Activated naive CD4-positive, alpha-beta T cell treated with anti-CD3 and anti-CD28 coated beads for 36 hours (primary cell): ENCODE measurements at regions of chr3 and their contacts with region 1.

Region 1: GRCh38 chr3:71006810-71007785 is 576.4 kb downstream of the FOXP1 start:
- DNase-seq: no peak
- H3K4me3 Mint-ChIP-seq: no peak overlapping the region
- H3K27ac Mint-ChIP-seq: peak overlapping the region; percentile 71
- H3K4me1 Mint-ChIP-seq: peaks cover 77% of the 10 kb centered on the region
- H3K27me3 Mint-ChIP-seq: no peaks in the 10 kb centered on the region

Region 2: DNA sequence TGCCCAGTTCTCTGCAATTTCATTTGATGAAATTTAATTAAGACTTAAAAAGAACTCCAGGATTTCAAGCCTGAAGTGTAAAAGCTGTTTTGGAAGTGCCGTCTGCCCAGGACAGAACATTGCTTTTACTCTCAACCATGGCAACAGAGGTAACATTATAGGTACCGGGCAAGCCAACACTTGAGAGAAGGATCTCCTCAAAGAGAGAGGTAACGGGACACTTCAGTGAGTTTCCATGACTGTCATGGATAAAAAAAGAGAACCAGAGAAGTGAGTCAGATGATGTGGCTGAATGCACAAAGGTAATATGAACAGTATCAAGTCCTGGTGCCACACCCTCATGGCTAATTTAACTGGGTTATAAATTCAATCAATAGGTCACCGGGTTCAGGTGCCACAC is 1754.5 kb before region 1 on chr3:
- CTCF ChIA-PET with region 1: no interaction called
- intact Hi-C with region 1: no loop called
- DNase-seq: no peak
- H3K4me3 Mint-ChIP-seq: no peak overlapping the region
- H3K27ac Mint-ChIP-seq: no peak overlapping the region
- H3K4me1 Mint-ChIP-seq: peaks cover 13% of the 10 kb centered on the region
- H3K27me3 Mint-ChIP-seq: no peaks in the 10 kb centered on the region

Region 3: GRCh38 chr3:70550723-70551319 is 456.3 kb before region 1 on chr3:
- CTCF ChIA-PET with region 1: interaction called, 5 read pairs
- intact Hi-C with region 1: loop called (anchors 5 kb)
- DNase-seq: peak; percentile 88
- H3K4me3 Mint-ChIP-seq: no peak overlapping the region
- H3K27ac Mint-ChIP-seq: no peak overlapping the region
- H3K4me1 Mint-ChIP-seq: no peaks in the 10 kb centered on the region
- H3K27me3 Mint-ChIP-seq: no peaks in the 10 kb centered on the region

Region 4: DNA sequence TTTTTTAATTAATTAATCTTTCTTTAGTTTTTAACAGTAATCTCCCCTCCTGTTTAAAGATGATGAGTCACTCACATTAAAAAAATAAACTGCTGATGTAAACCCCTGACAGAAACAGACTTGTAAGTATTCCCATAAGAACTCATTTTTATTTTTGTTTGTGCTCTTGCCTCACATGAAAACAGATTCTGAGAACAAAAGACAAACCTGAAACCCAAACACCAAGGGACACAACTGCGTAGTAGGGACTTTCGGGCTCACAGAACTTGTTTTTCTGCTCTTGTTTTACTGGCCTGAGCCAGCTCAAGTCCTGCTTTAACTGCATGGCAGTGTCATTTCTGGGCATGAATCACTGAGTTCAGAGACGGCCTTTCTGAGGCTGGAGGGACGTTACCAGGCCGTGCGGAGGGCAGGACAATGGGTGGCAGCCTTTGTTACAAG is 24.4 kb before region 1 on chr3:
- CTCF ChIA-PET with region 1: interaction called, 8 read pairs
- intact Hi-C with region 1: loop called (anchors 2 kb)
- DNase-seq: peak; percentile 66
- H3K4me3 Mint-ChIP-seq: no peak overlapping the region
- H3K27ac Mint-ChIP-seq: peak overlapping the region; percentile 96
- H3K4me1 Mint-ChIP-seq: peaks cover 74% of the 10 kb centered on the region
- H3K27me3 Mint-ChIP-seq: no peaks in the 10 kb centered on the region

Region 5: GRCh38 chr3:71050538-71051258 is 43.6 kb after region 1 on chr3:
- CTCF ChIA-PET with region 1: interaction called, 5 read pairs
- intact Hi-C with region 1: loop called (anchors 1 kb)
- DNase-seq: peak; percentile 77
- H3K4me3 Mint-ChIP-seq: peak overlapping the region; percentile 6
- H3K27ac Mint-ChIP-seq: peak overlapping the region; percentile 92
- H3K4me1 Mint-ChIP-seq: peaks cover 100% of the 10 kb centered on the region
- H3K27me3 Mint-ChIP-seq: no peaks in the 10 kb centered on the region

Region 6: DNA sequence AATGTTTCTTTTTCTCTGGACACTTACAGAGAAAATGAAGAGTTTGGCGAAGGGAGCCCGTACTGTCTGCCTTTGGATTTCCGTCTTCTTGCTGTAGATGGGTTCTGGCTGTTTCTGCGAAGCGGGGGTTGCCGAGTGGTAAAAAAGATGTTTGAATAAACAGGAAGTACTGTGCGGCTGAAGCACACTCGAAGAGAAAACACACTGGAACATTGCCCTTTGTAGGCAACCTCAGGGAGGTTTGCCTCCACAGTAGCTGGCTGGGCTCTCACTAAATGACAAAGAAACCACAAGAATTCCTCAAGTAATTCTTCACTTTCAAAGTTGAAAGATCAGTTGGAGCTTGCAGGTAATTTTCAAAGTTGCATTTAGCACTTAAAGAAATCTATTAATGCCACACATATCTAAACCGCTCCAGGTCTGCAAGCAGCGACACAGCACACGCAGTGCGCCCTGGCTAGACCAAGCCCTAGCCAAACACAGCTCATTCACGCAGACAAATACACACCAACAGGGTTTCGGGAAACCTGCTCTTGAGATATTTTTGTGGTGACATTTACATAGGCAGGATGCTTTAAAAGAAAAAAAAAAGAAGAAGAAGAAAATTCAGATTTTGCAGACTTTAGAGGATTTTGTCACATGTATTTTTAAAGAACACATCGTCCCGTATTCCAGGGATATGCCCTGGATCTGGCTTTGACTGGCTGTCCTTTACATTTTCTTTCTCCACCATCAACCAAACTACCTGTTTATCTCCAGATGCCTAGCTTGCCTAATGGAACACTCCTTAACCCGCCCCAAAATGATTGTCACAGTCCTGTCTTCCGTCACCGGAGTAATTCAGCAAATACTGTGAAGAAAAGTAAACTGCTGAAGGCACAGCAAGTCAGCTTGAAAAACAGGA is 123.6 kb after region 1 on chr3:
- CTCF ChIA-PET with region 1: no interaction called
- intact Hi-C with region 1: loop called (anchors 2 kb)
- DNase-seq: peak; percentile 82
- H3K4me3 Mint-ChIP-seq: peak overlapping the region; percentile 88
- H3K27ac Mint-ChIP-seq: peak overlapping the region; percentile 96
- H3K4me1 Mint-ChIP-seq: peaks cover 66% of the 10 kb centered on the region
- H3K27me3 Mint-ChIP-seq: no peaks in the 10 kb centered on the region

Region 7: DNA sequence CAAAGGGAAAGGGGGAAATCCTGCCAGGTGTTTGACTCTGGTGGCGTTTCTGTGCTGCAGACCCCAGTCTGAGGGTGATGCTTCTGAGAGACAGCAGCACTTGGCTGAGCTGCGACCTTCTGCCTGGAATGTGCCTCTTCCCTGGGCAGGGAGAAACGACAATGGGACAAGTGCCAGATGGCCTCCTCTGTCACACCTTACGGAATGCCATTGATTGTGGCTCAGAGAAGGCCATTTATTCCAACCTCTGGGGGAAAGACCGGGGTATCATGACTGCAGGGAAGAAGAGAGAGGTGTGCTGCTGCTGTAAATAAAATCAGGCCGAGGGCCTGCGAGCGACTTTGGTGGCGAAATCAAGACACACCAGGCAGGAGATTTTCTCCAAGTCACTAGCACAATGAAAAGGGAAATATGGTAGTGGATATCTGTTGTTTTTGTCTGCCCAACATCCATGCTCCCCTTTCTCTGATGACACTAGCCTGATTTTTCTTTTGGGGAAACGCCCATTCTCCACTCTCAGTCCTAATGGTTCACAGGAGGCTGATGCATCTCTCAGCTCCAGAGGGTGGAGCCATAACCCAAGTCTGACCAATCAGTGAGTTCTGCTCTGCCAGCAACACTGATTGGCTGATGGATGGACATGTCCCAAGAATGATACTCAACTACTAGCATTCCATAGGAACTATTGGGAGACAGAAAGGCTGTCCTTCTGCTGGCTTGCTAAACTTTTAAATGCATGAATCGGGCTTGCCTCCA is 240.3 kb after region 1 on chr3:
- CTCF ChIA-PET with region 1: no interaction called
- intact Hi-C with region 1: no loop called
- DNase-seq: peak; percentile 53
- H3K4me3 Mint-ChIP-seq: no peak overlapping the region
- H3K27ac Mint-ChIP-seq: peak overlapping the region; percentile 28
- H3K4me1 Mint-ChIP-seq: peaks cover 77% of the 10 kb centered on the region
- H3K27me3 Mint-ChIP-seq: no peaks in the 10 kb centered on the region

Region 8: DNA sequence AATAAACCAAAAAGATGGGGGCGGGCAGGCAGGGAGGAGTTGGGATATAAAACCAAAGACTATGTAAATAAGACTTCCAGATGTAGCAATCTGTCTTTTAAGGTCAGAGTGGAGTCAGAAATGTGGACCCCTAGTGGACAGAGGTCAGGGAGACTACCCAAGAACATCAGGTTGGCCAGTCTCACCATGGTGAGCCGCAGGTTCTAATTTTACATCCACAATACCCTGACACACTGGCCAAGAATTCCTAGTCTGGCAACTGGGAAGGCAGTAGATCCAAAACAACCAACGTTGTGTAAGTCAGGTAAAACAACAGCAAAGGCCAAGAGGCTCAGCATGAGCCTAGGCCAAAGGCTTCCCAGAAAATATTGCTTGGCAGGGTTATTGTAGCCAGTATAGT is 373.0 kb after region 1 on chr3:
- CTCF ChIA-PET with region 1: no interaction called
- intact Hi-C with region 1: loop called (anchors 5 kb)
- DNase-seq: no peak
- H3K4me3 Mint-ChIP-seq: no peak overlapping the region
- H3K27ac Mint-ChIP-seq: peak overlapping the region; percentile 69
- H3K4me1 Mint-ChIP-seq: peaks cover 88% of the 10 kb centered on the region
- H3K27me3 Mint-ChIP-seq: no peaks in the 10 kb centered on the region

Region 9: GRCh38 chr3:71611099-71611498 is 604.0 kb after region 1 on chr3:
- CTCF ChIA-PET with region 1: no interaction called
- intact Hi-C with region 1: no loop called
- DNase-seq: no peak
- H3K4me3 Mint-ChIP-seq: no peak overlapping the region
- H3K27ac Mint-ChIP-seq: no peak overlapping the region
- H3K4me1 Mint-ChIP-seq: no peaks in the 10 kb centered on the region
- H3K27me3 Mint-ChIP-seq: no peaks in the 10 kb centered on the region

Region 10: DNA sequence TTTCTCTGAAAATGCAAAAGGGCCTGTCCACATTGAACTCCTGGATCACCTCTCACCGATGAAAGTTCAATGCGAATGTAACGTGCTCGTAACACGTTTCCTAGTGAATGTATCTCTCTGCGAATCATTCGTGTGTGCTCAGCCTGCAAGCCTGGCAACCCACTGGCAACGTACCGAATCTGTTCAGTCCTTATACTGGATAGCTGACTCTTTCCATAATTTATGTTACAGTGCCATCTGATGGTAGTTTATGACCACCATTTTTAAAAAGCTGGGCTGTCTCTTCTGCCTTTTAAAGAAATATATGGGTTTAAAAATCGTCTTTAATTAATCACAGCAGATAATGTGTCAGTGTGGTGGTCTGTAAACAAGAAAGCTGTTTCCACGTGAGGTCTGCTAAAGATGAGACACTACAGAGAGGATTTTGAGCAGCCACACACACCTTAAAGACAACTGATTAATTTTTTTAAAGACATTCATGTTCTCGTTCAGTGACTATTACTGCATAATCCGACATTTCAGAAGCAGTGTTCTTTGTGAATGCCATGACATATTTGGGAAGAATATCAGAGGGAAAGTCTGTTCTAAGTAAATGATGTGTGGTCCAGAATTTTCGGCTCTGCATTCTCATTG is 645.8 kb after region 1 on chr3:
- CTCF ChIA-PET with region 1: no interaction called
- intact Hi-C with region 1: loop called (anchors 5 kb)
- DNase-seq: peak; percentile 42
- H3K4me3 Mint-ChIP-seq: no peak overlapping the region
- H3K27ac Mint-ChIP-seq: no peak overlapping the region
- H3K4me1 Mint-ChIP-seq: peaks cover 4% of the 10 kb centered on the region
- H3K27me3 Mint-ChIP-seq: no peaks in the 10 kb centered on the region